ENCODE measurements at regions of chr17 and their contacts with region 1.

Region 1: GRCh38 chr17:17739388-17740066 is 58.3 kb downstream of the RAI1 start:
- DNase-seq: peak in 1 of 3 donors; percentile 31
- H3K4me3 ChIP-seq: no peak overlapping the region
- H3K27ac ChIP-seq: peak overlapping the region in 1 of 2 experiments; percentile 9
- H3K4me1 ChIP-seq: peaks cover 0 to 52% (median 45%) of the 10 kb centered on the region in 4 experiments
- H3K27me3 ChIP-seq: no peaks in the 10 kb centered on the region

Region 2: DNA sequence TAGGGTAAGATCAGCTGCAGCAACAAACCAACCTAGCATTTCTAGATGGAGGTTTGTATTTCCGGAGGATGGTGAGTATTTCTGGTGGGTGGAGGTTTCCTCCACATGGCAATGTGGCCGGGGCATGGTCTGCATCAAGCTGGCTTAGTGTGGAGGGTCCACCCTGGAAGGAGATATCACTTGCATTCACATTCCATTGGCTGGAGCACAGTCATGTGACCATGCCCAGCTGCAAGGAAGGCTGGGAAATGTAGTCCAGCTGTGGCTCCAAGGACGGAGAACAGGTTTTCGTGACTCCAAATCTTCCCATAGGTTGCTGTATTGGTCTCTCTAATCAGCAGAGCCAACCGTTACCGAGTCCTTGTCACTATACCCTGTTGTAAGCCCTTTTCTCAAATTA is 10.4 kb after region 1 on chr17:
- CTCF ChIA-PET with region 1: interaction called, 25 read pairs
- POLR2A ChIA-PET with region 1: no interaction called
- DNase-seq: peak; percentile 73 to 93 (median 92)
- H3K4me3 ChIP-seq: peak overlapping the region in 4 of 7 experiments; percentile 10 to 40 (median 21)
- H3K27ac ChIP-seq: peak overlapping the region in 1 of 2 experiments; percentile 32
- H3K4me1 ChIP-seq: peaks cover 15 to 79% (median 76%) of the 10 kb centered on the region in 4 experiments
- H3K27me3 ChIP-seq: no peaks in the 10 kb centered on the region